Activated CD4-positive, alpha-beta memory T cell treated with anti-CD3 and anti-CD28 coated beads, Interleukin-2, amount 10 ng/mL, durations not matched to agents 7 days and 5 days (primary cell): ENCODE measurements at regions of chr1 and their contacts with region 1.

Region 1: GRCh38 chr1:201703621-201704439 is 125.1 kb upstream of the IPO9 start:
- DNase-seq: peak; percentile 68
- H3K4me3 Mint-ChIP-seq: no peak overlapping the region
- H3K27ac Mint-ChIP-seq: no peak overlapping the region
- H3K4me1 Mint-ChIP-seq: no peaks in the 10 kb centered on the region
- H3K27me3 Mint-ChIP-seq: peaks cover 4% of the 10 kb centered on the region

Region 2: DNA sequence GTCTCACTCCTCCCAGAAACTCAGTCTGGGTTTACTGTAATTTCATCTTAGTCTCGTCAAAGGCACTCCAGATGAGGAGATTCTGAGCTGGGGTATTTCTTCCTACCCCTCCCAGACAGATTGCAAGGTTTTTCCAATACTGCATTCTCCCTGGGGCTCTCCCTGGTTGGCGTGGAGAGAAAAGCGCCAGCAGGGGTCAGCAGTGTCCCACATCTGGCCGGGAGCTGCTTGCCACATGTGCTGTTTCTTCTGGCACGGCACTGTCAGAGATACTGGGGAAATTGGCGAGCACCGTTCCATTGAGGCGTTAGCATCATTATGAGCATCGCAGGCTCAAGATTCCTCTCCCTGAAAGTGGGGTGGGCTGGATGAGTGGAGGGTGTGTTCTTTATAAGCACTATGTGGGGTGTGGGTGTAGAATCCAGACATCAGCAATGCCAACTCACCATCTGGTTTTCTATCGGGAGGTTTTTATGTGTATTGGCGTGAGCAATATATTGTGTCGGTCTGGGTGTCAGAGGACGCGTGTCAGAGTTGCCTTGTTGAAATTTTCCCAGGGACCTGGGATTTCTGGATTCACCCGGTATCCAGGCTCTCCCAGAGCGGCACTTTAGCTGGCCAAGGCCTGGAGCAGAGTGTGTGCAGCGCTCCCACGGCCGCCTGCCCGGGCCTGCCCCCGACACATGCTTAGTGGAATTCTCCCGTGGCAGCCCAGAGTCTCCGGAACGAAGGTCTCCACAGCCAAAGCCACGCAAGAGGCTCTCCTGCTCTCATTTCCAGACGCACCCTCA is 172.9 kb before region 1 on chr1:
- CTCF ChIA-PET with region 1: interaction called, 10 read pairs
- POLR2A ChIA-PET with region 1: no interaction called
- DNase-seq: peak; percentile 37
- H3K4me3 Mint-ChIP-seq: no peak overlapping the region
- H3K27ac Mint-ChIP-seq: no peak overlapping the region
- H3K4me1 Mint-ChIP-seq: peaks cover 3% of the 10 kb centered on the region
- H3K27me3 Mint-ChIP-seq: peaks cover 4% of the 10 kb centered on the region

Region 3: DNA sequence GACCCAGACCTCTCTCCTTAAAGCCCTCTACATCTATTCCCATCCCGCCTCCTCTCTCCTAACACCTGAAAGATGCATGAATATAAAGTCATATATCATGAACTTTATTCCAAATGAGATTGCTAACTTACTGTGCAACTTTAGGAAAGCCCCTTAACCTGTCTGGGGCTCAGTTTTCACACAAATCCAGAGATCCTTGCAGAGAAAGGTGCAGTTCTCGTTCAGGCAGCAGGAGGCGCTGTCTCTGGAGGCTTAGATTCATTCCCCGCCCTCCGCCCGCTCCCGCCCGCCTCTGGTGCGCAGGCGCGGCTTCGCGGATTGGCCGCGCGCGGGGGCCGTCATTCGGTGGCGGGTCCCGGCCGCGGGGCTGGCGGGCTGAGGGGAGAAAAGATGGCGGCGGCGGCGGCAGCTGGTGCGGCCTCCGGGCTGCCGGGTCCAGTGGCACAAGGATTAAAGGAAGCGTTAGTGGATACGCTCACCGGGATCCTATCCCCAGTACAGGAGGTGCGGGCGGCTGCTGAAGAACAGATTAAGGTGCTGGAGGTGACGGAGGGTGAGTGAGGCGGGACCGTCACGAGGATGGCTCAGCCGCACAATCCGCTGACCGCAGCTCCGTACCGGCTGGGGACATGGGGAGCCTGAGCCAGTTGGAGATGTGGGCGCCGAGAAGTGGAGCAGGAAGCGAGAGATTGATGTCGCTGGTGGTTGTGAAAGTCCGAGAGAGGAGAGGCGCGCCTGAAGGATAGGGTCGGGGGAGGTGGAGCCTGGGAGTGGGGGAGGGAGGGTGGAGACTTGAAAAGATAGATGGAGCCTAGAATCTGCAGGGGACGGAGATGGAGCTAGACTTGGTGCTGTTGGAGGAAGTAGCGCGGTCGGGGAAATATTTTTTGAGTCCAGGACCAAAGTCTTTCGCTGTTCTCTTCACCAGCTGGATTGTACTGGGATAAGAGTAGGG is 125.3 kb after region 1 on chr1 and contains the start of gene IPO9:
- CTCF ChIA-PET with region 1: no interaction called
- POLR2A ChIA-PET with region 1: no interaction called
- DNase-seq: peak; percentile 95
- H3K4me3 Mint-ChIP-seq: peak within 1 kb of the TSS; percentile 94
- H3K27ac Mint-ChIP-seq: peak within 1 kb of the TSS; percentile 90
- H3K4me1 Mint-ChIP-seq: peaks cover 40% of the 10 kb centered on the region
- H3K27me3 Mint-ChIP-seq: no peaks in the 10 kb centered on the region
- total RNA-seq, gene IPO9: 44.3 to 49.5 TPM

Region 4: GRCh38 chr1:201933840-201934430 is 230.1 kb after region 1 on chr1:
- CTCF ChIA-PET with region 1: no interaction called
- POLR2A ChIA-PET with region 1: no interaction called
- DNase-seq: no peak
- H3K4me3 Mint-ChIP-seq: no peak overlapping the region
- H3K27ac Mint-ChIP-seq: no peak overlapping the region
- H3K4me1 Mint-ChIP-seq: no peaks in the 10 kb centered on the region
- H3K27me3 Mint-ChIP-seq: peaks cover 20% of the 10 kb centered on the region